Spleen (tissue), 13 donors: ENCODE measurements at regions of chr2 and their contacts with region 1.

Region 1: GRCh38 chr2:160994141-160995002 is 165.9 kb upstream of the TANK start:
- DNase-seq: no peak
- H3K4me3 ChIP-seq: no peak overlapping the region
- H3K27ac ChIP-seq: no peak overlapping the region
- H3K4me1 ChIP-seq: peaks cover 0 to 13% (median 8%) of the 10 kb centered on the region in 6 donors
- H3K27me3 ChIP-seq: no peaks in the 10 kb centered on the region
- CTCF ChIP-seq: peak; percentile 63 to 90 (median 81)
- POLR2A ChIP-seq: no peak

Region 2: GRCh38 chr2:160109936-160110673 is 884.3 kb before region 1 on chr2:
- intact Hi-C with region 1: loop called (anchors 10 kb)
- DNase-seq: no peak
- H3K4me3 ChIP-seq: no peak overlapping the region
- H3K27ac ChIP-seq: no peak overlapping the region
- H3K4me1 ChIP-seq: peaks cover 0 to 4% (median 0%) of the 10 kb centered on the region in 6 donors
- H3K27me3 ChIP-seq: peaks cover 0 to 6% (median 0%) of the 10 kb centered on the region in 7 donors
- CTCF ChIP-seq: peak in 10 of 11 experiments; percentile 52 to 71 (median 62)
- POLR2A ChIP-seq: no peak

Region 3: GRCh38 chr2:160241251-160242137 is 752.9 kb before region 1 on chr2:
- intact Hi-C with region 1: loop called (anchors 10 kb)
- DNase-seq: no peak
- H3K4me3 ChIP-seq: no peak overlapping the region
- H3K27ac ChIP-seq: no peak overlapping the region
- H3K4me1 ChIP-seq: peaks cover 0 to 13% (median 0%) of the 10 kb centered on the region in 6 donors
- H3K27me3 ChIP-seq: no peaks in the 10 kb centered on the region
- CTCF ChIP-seq: no peak
- POLR2A ChIP-seq: no peak

Region 4: DNA sequence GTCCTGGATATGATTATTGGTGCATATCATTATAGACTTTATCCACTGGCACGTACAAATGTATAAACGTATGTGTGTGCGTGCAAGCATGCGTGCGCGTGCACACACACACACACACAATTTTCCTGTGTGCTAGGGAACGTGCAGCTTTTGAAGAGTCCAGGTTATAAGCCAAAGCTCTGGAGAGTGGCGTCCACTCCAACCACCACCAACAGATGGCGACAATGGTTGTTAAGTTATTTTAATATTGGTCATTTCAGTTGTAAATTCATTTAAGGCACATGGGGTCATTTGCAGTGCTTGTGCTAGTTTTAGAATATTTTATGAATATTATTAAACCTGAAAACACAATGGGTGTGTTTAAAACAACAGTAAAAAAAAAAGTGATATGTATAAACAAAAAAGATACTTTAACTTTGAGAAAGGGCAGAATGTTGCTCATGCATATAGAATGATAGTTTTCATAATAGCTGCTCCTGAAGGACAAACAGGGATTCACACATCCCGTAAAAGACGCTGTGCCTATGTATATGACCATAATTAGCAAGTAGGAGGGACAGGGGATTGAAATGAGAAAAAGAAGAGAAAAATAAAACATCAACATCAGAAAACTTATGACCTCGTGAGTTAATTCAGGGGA is 670.1 kb before region 1 on chr2:
- intact Hi-C with region 1: loop called (anchors 10 kb)
- DNase-seq: peak; percentile 78
- H3K4me3 ChIP-seq: no peak overlapping the region
- H3K27ac ChIP-seq: no peak overlapping the region
- H3K4me1 ChIP-seq: peaks cover 31 to 100% (median 82%) of the 10 kb centered on the region in 6 donors
- H3K27me3 ChIP-seq: no peaks in the 10 kb centered on the region
- CTCF ChIP-seq: peak in 10 of 11 experiments; percentile 44 to 80 (median 70)
- POLR2A ChIP-seq: no peak

Region 5: DNA sequence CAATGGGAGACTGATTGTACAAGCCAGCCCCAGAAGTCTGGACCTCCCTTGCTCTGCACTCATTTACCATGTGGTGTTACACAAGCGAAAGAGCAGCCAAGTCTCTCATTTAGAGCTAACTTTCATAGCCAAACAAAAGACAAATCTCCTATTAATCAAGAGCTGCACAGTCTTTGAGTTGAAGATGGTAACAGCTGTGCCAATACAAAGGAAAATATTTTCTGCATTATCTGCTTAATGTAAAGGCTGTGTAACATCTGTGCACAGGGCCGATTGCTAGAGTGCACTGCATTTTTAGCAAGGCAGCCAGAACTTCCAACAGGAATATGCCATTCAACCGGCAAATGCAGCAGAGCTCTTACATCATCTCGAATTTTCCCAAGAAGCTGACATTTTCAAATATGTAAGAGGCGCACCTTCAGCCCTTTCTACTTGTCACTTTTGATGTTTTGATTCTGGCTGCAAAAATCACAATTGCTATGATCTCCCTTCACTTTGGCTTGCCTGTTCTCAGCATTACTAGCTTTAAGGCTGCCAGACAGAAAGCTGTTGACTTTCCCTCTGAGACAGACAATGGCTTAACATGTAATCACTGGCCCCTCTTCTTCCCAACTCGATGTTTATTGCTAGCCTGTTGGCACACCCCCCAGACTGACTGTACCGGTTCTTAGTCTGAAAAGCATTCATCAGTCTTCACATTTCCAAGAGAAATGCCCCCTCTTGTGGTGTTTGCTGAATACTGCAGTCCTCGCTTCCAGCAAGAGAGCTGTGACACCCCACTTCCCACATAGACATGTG is 69.0 kb after region 1 on chr2:
- intact Hi-C with region 1: no loop called
- DNase-seq: no peak
- H3K4me3 ChIP-seq: no peak overlapping the region
- H3K27ac ChIP-seq: no peak overlapping the region
- H3K4me1 ChIP-seq: peaks cover 0 to 13% (median 5%) of the 10 kb centered on the region in 6 donors
- H3K27me3 ChIP-seq: no peaks in the 10 kb centered on the region
- CTCF ChIP-seq: peak; percentile 73 to 95 (median 91)
- POLR2A ChIP-seq: no peak